ENCODE measurements at regions of chr6 and their contacts with region 1.

Region 1: GRCh38 chr6:116371120-116371917 is 572 bp downstream of the DSE start:
- DNase-seq: peak; percentile 94
- H3K4me3 Mint-ChIP-seq: peak overlapping the region; percentile 85
- H3K27ac Mint-ChIP-seq: peak overlapping the region; percentile 88
- H3K4me1 Mint-ChIP-seq: peaks cover 32% of the 10 kb centered on the region
- H3K27me3 Mint-ChIP-seq: no peaks in the 10 kb centered on the region
- CTCF ChIP-seq: no peak

Region 2: DNA sequence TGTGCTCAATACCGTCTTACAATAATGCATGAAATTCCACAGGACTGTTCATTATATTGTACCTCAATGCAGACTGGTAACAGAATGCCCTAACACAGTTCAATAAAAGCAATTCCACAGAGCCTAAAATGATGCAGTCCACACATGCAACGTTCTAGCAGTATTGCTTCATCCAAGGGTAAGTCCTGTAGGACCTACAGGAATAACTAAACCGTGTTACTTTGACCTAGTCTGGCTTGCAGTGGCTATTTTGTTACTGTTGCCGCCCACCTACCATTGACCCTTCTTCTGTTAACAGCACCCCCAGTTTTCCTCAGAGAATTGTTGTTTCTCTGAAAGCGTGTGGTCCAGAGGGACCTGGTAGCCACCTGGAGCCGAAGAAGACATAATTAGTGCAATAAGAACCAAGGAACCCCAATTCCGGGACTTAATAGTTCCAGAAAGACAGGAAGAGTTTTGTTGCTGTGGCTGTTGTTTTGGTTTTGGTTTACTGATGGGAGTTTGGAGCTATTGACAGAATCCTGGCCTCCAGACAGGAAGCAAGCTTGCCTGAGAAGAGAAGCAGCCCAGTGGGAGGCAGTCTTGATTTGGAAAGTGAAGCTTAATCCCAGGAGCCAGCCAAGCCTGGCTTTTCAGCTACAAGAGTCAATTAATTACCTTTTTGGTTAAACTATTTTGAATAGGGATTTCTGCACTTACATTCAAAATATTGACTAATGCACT is 402.0 kb before region 1 on chr6:
- CTCF ChIA-PET with region 1: no interaction called
- POLR2A ChIA-PET with region 1: no interaction called
- intact Hi-C with region 1: no loop called
- DNase-seq: no peak
- H3K4me3 Mint-ChIP-seq: no peak overlapping the region
- H3K27ac Mint-ChIP-seq: no peak overlapping the region
- H3K4me1 Mint-ChIP-seq: no peaks in the 10 kb centered on the region
- H3K27me3 Mint-ChIP-seq: no peaks in the 10 kb centered on the region
- CTCF ChIP-seq: no peak

Region 3: GRCh38 chr6:116287689-116288282 is 83.5 kb before region 1 on chr6:
- CTCF ChIA-PET with region 1: interaction called, 13 read pairs
- POLR2A ChIA-PET with region 1: interaction called, 45 read pairs
- intact Hi-C with region 1: loop called (anchors 1 kb)
- DNase-seq: peak; percentile 69
- H3K4me3 Mint-ChIP-seq: no peak overlapping the region
- H3K27ac Mint-ChIP-seq: no peak overlapping the region
- H3K4me1 Mint-ChIP-seq: no peaks in the 10 kb centered on the region
- H3K27me3 Mint-ChIP-seq: no peaks in the 10 kb centered on the region
- CTCF ChIP-seq: peak; percentile 83

Region 4: DNA sequence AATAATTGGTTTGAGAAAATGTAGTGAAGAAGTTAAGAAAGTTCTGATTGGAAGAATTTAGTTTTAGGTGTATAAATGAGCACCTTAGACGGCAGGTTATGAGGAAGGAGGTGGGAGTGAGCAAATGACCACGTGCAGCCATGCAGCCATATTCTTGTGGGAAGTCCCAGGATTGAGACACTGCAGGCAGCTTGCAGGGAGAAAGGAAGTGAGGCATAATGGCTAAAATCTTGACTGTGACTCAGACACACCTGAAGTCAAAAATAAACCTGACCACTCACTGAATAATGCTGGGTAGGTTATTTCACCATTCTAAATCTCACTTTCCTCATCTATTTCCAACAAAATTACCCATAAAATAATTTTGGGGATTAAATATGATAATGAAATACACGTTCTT is 16.1 kb after region 1 on chr6:
- CTCF ChIA-PET with region 1: interaction called, 7 read pairs
- POLR2A ChIA-PET with region 1: interaction called, 117 read pairs
- intact Hi-C with region 1: loop called (anchors 1 kb)
- DNase-seq: peak; percentile 96
- H3K4me3 Mint-ChIP-seq: peak overlapping the region; percentile 50
- H3K27ac Mint-ChIP-seq: peak overlapping the region; percentile 89
- H3K4me1 Mint-ChIP-seq: peaks cover 56% of the 10 kb centered on the region
- H3K27me3 Mint-ChIP-seq: no peaks in the 10 kb centered on the region
- CTCF ChIP-seq: no peak

Region 5: DNA sequence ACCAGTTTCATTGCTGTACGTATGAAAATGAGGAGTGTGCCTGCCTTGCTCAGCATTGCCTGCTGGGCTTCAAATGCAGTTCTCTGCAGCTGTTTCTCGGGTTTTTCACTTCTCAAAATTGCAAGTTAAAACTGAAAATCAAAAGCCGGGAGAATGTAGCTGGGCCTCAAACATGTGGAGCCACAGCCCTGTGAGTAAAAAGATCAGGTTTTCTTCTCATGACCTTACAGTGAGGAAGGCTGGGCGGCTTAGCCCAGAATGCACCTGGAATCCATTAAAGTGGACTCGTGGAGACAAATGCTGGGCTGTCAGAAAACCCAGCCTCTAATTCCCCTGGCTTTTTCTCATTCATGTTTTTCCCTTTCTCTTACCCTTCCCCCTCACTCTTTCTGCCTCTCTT is 33.8 kb after region 1 on chr6:
- CTCF ChIA-PET with region 1: interaction called, 6 read pairs
- POLR2A ChIA-PET with region 1: interaction called, 36 read pairs
- intact Hi-C with region 1: no loop called
- DNase-seq: no peak
- H3K4me3 Mint-ChIP-seq: no peak overlapping the region
- H3K27ac Mint-ChIP-seq: no peak overlapping the region
- H3K4me1 Mint-ChIP-seq: peaks cover 21% of the 10 kb centered on the region
- H3K27me3 Mint-ChIP-seq: no peaks in the 10 kb centered on the region
- CTCF ChIP-seq: no peak

Region 6: GRCh38 chr6:116424001-116424400 is 52.7 kb after region 1 on chr6:
- CTCF ChIA-PET with region 1: interaction called, 9 read pairs
- POLR2A ChIA-PET with region 1: interaction called, 17 read pairs
- intact Hi-C with region 1: no loop called
- DNase-seq: peak; percentile 45
- H3K4me3 Mint-ChIP-seq: no peak overlapping the region
- H3K27ac Mint-ChIP-seq: peak overlapping the region; percentile 9
- H3K4me1 Mint-ChIP-seq: peaks cover 8% of the 10 kb centered on the region
- H3K27me3 Mint-ChIP-seq: no peaks in the 10 kb centered on the region
- CTCF ChIP-seq: no peak

Region 7: DNA sequence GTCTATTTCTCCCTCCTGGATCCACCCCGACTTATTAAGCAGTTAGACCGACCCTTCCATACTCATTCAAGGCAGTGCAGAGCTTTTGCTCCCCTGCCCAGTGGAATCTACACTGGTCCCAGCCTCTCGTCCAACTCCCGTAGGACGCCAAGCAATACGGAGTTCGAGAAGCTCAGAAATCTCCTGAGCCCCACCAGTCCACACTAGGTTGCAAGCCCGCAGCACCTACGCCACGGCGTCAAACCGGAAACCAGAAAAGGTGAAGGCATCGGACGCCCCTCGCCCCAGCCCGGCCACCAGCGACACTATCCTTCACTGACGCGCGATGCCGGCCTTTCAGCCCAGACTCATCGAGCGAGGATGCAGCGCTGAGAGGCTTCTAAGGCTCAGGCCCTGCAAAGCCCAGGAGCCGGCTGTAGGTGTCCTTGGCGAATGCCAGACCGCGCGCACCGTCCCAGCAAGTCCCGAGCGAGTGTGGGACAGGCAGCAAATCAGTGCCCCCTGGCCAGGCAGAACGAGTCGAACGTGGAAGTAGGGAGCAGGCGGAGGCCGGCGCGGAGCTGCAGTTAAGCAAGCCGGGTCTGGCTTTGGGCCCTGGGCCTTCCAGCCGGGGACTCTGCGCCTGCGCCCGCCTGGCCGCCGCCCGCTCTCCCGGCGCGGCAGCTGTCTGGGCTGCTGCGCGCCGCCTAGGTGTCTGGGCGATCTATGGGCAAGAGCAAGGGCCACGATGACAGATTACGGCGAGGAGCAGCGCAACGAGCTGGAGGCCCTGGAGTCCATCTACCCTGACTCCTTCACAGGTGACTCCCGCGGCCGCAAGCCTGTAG is 199.8 kb after region 1 on chr6 and contains the start of gene RWDD1:
- CTCF ChIA-PET with region 1: no interaction called
- POLR2A ChIA-PET with region 1: interaction called, 13 read pairs
- intact Hi-C with region 1: no loop called
- DNase-seq: peak; percentile 98
- H3K4me3 Mint-ChIP-seq: peak within 1 kb of the TSS; percentile 98
- H3K27ac Mint-ChIP-seq: peak within 1 kb of the TSS; percentile 98
- H3K4me1 Mint-ChIP-seq: peaks cover 25% of the 10 kb centered on the region
- H3K27me3 Mint-ChIP-seq: no peaks in the 10 kb centered on the region
- CTCF ChIP-seq: no peak
- total RNA-seq, gene RWDD1: 41.6 and 57.2 TPM in 2 replicates

Measured in MCF 10A (cell line).